ENCODE measurements at regions of chr7 and their contacts with region 1.

Region 1: DNA sequence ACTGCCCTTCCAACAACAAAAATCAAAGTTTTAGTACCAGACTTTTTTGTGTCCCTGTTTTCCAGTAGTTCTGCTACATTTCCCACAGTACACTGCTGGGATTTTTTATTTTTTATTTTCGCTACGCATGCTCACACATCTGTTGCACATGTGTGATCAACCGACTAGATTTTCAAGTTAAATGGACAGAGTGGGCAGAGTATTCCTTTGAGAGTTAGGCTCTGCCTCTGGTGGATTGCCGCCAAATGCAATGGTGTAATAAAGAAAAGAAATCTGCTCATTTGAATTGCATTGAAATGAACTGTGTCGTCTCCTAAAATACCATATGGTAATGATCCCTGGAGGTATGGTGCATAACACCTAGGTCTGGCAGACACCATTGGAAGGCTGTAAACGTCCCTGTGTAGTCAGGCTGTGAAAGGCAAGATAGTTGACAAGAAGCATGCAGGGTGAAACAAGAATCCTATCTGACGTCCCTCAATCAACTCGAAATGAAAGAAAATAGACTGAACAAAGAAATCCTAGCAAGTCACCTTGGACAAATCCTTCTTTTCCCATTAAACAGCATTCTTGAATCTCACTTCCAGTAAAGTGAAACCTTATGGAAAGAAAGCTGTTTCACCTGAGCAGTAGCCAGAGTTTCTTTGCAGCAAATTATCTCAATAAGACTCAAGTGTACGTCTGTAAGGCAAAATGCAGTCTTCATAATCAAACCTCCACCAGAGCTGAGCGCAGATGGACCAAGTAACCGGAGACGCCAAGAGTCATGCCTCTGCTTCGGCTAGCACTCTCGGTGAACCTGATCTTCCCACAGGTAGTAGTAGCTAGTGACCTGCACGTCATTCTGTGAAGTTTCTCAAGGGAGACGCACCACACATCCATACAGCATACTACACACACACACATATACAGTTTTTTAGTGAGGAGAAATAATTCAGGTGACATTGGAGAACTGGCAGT is 357.3 kb downstream of the CRPPA start:
- DNase-seq: no peak
- ATAC-seq: no peak
- H3K4me3 Mint-ChIP-seq: no peak overlapping the region
- H3K27ac Mint-ChIP-seq: no peak overlapping the region
- H3K4me1 Mint-ChIP-seq: peaks cover 34% of the 10 kb centered on the region
- H3K27me3 Mint-ChIP-seq: peaks cover 25% of the 10 kb centered on the region
- CTCF ChIP-seq: no peak

Region 2: DNA sequence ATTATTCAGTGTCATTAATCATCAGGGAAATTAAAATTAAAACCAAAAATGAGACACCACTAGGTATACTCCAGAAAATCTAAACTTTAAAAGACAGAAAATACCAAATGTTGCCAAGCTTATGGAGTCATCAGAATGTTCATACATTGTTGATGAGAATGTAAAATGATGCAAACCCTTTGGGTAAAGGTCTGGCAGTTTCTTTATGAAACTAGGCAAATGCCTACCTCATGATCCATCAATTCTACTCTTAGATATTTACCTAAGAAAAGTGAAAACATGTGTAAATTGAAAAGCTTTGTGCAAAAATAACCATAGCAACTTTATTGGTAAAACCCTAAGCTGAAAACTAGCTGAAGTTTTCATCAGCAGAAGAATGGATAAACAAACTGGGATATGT is 48.0 kb before region 1 on chr7:
- CTCF ChIA-PET with region 1: no interaction called
- POLR2A ChIA-PET with region 1: no interaction called
- DNase-seq: no peak
- ATAC-seq: no peak
- H3K4me3 Mint-ChIP-seq: no peak overlapping the region
- H3K27ac Mint-ChIP-seq: no peak overlapping the region
- H3K4me1 Mint-ChIP-seq: no peaks in the 10 kb centered on the region
- H3K27me3 Mint-ChIP-seq: no peaks in the 10 kb centered on the region
- CTCF ChIP-seq: no peak

Region 3: DNA sequence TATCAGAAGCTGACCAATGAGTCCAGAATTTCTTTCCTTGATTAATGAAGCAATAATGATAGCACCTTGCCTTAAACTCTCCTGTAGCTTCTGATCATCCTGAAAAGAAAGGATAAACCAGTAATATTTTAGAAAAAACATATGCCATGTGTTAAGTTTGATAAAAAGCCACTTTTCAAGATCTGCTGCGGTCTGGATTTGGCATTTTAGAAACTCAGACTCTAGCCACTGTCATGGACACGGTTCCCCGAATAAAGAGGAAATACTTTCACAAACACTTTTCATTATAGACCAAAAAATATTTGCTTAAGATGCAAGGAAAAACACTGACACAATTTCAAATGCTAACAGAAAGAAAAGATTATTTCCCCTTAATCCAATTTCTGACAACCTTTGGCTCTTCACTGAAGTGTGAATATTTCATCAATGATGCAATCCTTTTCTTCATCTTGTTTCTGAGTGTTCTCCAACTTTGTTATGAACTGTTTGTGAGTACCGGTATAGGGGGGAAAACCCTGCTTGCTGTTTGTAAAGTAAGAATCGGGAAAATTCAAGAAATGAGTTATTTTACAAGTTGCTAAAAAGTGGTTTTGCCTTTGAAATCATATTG is 27.8 kb after region 1 on chr7:
- CTCF ChIA-PET with region 1: no interaction called
- POLR2A ChIA-PET with region 1: no interaction called
- DNase-seq: no peak
- ATAC-seq: no peak
- H3K4me3 Mint-ChIP-seq: no peak overlapping the region
- H3K27ac Mint-ChIP-seq: no peak overlapping the region
- H3K4me1 Mint-ChIP-seq: peaks cover 7% of the 10 kb centered on the region; the same call in 1 of the 2 replicates
- H3K27me3 Mint-ChIP-seq: no peaks in the 10 kb centered on the region
- CTCF ChIP-seq: no peak

Region 4: GRCh38 chr7:16323313-16323712 is 259.3 kb after region 1 on chr7:
- CTCF ChIA-PET with region 1: no interaction called
- POLR2A ChIA-PET with region 1: interaction called, 12 read pairs
- DNase-seq: no peak
- ATAC-seq: no peak
- H3K4me3 Mint-ChIP-seq: no peak overlapping the region
- H3K27ac Mint-ChIP-seq: no peak overlapping the region
- H3K4me1 Mint-ChIP-seq: no peaks in the 10 kb centered on the region
- H3K27me3 Mint-ChIP-seq: no peaks in the 10 kb centered on the region
- CTCF ChIP-seq: no peak